ENCODE measurements at regions of chr5 and their contacts with region 1.

Region 1: GRCh38 chr5:39074016-39074886 is at the start of gene RICTOR:
- DNase-seq: peak; percentile 80 to 88
- H3K4me3 ChIP-seq: peak within 1 kb of the TSS; percentile 84 to 95 (median 88)
- H3K27ac ChIP-seq: peak within 1 kb of the TSS; percentile 99
- H3K4me1 ChIP-seq: peaks cover 0 to 9% of the 10 kb centered on the region in 2 donors
- H3K27me3 ChIP-seq: no peaks in the 10 kb centered on the region
- CTCF ChIP-seq: no peak
- POLR2A ChIP-seq: no peak
- total RNA-seq, gene RICTOR: 39.0 to 79.2 (median 58.7) TPM

Region 2: GRCh38 chr5:39005566-39006232 is 68.6 kb before region 1 on chr5:
- intact Hi-C with region 1: loop called (anchors 10 kb)
- DNase-seq: no peak
- H3K4me3 ChIP-seq: no peak overlapping the region
- H3K27ac ChIP-seq: no peak overlapping the region
- H3K4me1 ChIP-seq: no peaks in the 10 kb centered on the region
- H3K27me3 ChIP-seq: no peaks in the 10 kb centered on the region
- CTCF ChIP-seq: peak in 1 of 3 donors; percentile 8
- POLR2A ChIP-seq: no peak

Region 3: GRCh38 chr5:39106322-39106721 is 32.1 kb after region 1 on chr5:
- intact Hi-C with region 1: no loop called
- DNase-seq: no peak
- H3K4me3 ChIP-seq: no peak overlapping the region
- H3K27ac ChIP-seq: no peak overlapping the region
- H3K4me1 ChIP-seq: no peaks in the 10 kb centered on the region
- H3K27me3 ChIP-seq: no peaks in the 10 kb centered on the region
- CTCF ChIP-seq: peak in 1 of 3 donors; percentile 8
- POLR2A ChIP-seq: no peak